Activated CD4-positive, alpha-beta T cell treated with anti-CD3 and anti-CD28 coated beads, Interleukin-2, amount 10 ng/mL, durations not matched to agents 24 days and 14 days (primary cell): ENCODE measurements at regions of chr17 and their contacts with region 1.

Region 1: GRCh38 chr17:41648411-41649195 is 24.2 kb upstream of the KRT17 start:
- DNase-seq: peak; percentile 96
- H3K4me3 Mint-ChIP-seq: peak overlapping the region; percentile 76
- H3K27ac Mint-ChIP-seq: peak overlapping the region; percentile 23
- H3K4me1 Mint-ChIP-seq: peaks cover 7% of the 10 kb centered on the region
- H3K27me3 Mint-ChIP-seq: peaks cover 1% of the 10 kb centered on the region

Region 2: GRCh38 chr17:41486809-41487720 is 161.5 kb before region 1 on chr17:
- intact Hi-C with region 1: loop called (anchors 5 kb)
- DNase-seq: peak; percentile 80
- H3K4me3 Mint-ChIP-seq: no peak overlapping the region
- H3K27ac Mint-ChIP-seq: no peak overlapping the region
- H3K4me1 Mint-ChIP-seq: no peaks in the 10 kb centered on the region
- H3K27me3 Mint-ChIP-seq: no peaks in the 10 kb centered on the region